IMR-90 (cell line): ENCODE measurements at regions of chr7 and their contacts with region 1.

Region 1: GRCh38 chr7:90655566-90655965 is 59.4 kb downstream of the CDK14 start:
- DNase-seq: peak; percentile 94
- ATAC-seq: peak; percentile 82
- H3K4me3 ChIP-seq: no peak overlapping the region
- H3K27ac ChIP-seq: 0 out of 2 replicates have a peak overlapping the region, but pooled peaks have one; percentile 39
- H3K4me1 ChIP-seq: peaks cover 3% of the 10 kb centered on the region
- H3K27me3 ChIP-seq: no peaks in the 10 kb centered on the region
- CTCF ChIP-seq: no peak
- POLR2A ChIP-seq: no peak
- RAD21 ChIP-seq: no peak

Region 2: GRCh38 chr7:90674625-90675024 is 19.1 kb after region 1 on chr7:
- CTCF ChIA-PET with region 1: no interaction called
- POLR2A ChIA-PET with region 1: no interaction called
- dilution Hi-C with region 1: no loop called
- in situ Hi-C with region 1: no loop called
- intact Hi-C with region 1: loop called (anchors 2 kb)
- DNase-seq: no peak
- ATAC-seq: no peak
- H3K4me3 ChIP-seq: no peak overlapping the region
- H3K27ac ChIP-seq: no peak overlapping the region
- H3K4me1 ChIP-seq: peaks cover 9% of the 10 kb centered on the region; the same call in 1 of the 2 replicates
- H3K27me3 ChIP-seq: no peaks in the 10 kb centered on the region
- CTCF ChIP-seq: no peak
- POLR2A ChIP-seq: no peak
- RAD21 ChIP-seq: no peak

Region 3: GRCh38 chr7:90681336-90682022 is 25.9 kb after region 1 on chr7:
- CTCF ChIA-PET with region 1: no interaction called
- POLR2A ChIA-PET with region 1: no interaction called
- dilution Hi-C with region 1: no loop called
- in situ Hi-C with region 1: no loop called
- intact Hi-C with region 1: loop called (anchors 2 kb)
- DNase-seq: peak; percentile 56
- ATAC-seq: peak; percentile 47; the same call in 1 of the 2 replicates
- H3K4me3 ChIP-seq: no peak overlapping the region
- H3K27ac ChIP-seq: no peak overlapping the region
- H3K4me1 ChIP-seq: peaks cover 8% of the 10 kb centered on the region; the same call in 1 of the 2 replicates
- H3K27me3 ChIP-seq: no peaks in the 10 kb centered on the region
- CTCF ChIP-seq: no peak
- POLR2A ChIP-seq: no peak
- RAD21 ChIP-seq: no peak

Region 4: DNA sequence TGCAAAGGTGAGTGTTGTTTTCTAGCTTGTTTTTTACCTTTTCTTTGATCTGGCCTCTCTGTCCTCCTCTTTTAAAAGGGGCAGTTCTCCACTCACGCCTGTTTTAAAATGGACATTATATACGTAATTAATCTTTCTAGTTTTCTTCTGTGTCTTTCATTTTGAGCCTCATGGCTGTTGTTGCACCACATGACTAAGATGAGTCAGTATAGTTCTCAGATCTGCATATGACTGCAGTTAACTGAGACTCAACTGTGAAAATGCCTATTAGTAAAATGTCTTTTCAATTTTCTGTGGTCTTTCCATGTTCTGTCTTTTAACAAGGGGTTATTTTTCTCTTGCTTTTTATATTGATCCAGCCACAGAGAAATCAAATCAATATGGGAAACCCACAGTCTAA is 236.6 kb after region 1 on chr7:
- CTCF ChIA-PET with region 1: no interaction called
- POLR2A ChIA-PET with region 1: no interaction called
- dilution Hi-C with region 1: no loop called
- in situ Hi-C with region 1: no loop called
- intact Hi-C with region 1: no loop called
- DNase-seq: peak; percentile 14
- ATAC-seq: peak; percentile 61; the same call in 1 of the 2 replicates
- H3K4me3 ChIP-seq: no peak overlapping the region
- H3K27ac ChIP-seq: no peak overlapping the region
- H3K4me1 ChIP-seq: no peaks in the 10 kb centered on the region
- H3K27me3 ChIP-seq: no peaks in the 10 kb centered on the region
- CTCF ChIP-seq: no peak
- POLR2A ChIP-seq: no peak
- RAD21 ChIP-seq: no peak